ENCODE measurements at regions of chr4 and their contacts with region 1.

Region 1: DNA sequence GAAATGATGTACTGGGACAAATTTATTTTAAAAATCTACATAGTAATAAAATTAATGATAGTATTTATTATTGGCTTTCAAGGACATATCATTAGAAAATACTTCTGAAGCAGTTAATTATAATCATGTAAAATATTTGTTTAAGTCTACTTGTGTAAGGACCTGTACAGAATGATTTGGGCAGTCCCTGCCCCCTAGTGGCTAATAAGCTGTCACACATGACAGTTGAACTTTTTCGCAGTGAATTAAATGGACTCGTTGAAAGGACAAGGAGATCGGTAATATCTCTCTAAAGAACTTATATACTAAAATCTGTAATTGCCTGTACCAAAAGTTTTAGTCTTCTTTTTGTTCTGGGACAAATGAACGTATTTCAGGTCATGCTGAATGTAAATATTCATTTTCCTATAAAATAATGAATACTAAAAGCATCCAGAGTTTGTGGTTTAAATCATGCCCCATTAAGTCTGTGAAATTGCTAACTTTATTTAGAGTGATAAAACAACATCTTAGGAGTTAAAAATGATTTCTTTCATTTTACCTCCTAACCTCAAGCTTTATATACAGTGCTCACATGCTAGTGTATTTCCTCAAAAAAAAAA is 13.6 kb downstream of the EXOC1 start:
- DNase-seq: peak; percentile 76
- H3K4me3 Mint-ChIP-seq: no peak overlapping the region
- H3K27ac Mint-ChIP-seq: no peak overlapping the region
- H3K4me1 Mint-ChIP-seq: peaks cover 22% of the 10 kb centered on the region
- H3K27me3 Mint-ChIP-seq: no peaks in the 10 kb centered on the region
- CTCF ChIP-seq: peak; percentile 73

Region 2: GRCh38 chr4:55395529-55396307 is 471.4 kb before region 1 on chr4 and contains the start of gene TMEM165:
- CTCF ChIA-PET with region 1: interaction called, 4 read pairs
- POLR2A ChIA-PET with region 1: interaction called, 5 read pairs
- intact Hi-C with region 1: loop called (anchors 5 kb)
- DNase-seq: peak; percentile 93
- H3K4me3 Mint-ChIP-seq: peak within 1 kb of the TSS; percentile 93
- H3K27ac Mint-ChIP-seq: peak within 1 kb of the TSS; percentile 98
- H3K4me1 Mint-ChIP-seq: peaks cover 22% of the 10 kb centered on the region
- H3K27me3 Mint-ChIP-seq: no peaks in the 10 kb centered on the region
- CTCF ChIP-seq: no peak
- total RNA-seq, gene TMEM165: 110 and 119 TPM in 2 replicates

Region 3: GRCh38 chr4:55546756-55547465 is 320.2 kb before region 1 on chr4 and contains the start of gene CLOCK:
- CTCF ChIA-PET with region 1: interaction called, 10 read pairs
- POLR2A ChIA-PET with region 1: interaction called, 22 read pairs
- intact Hi-C with region 1: loop called (anchors 2 kb)
- DNase-seq: peak; percentile 85
- H3K4me3 Mint-ChIP-seq: peak within 1 kb of the TSS; percentile 87
- H3K27ac Mint-ChIP-seq: peak within 1 kb of the TSS; percentile 49
- H3K4me1 Mint-ChIP-seq: peaks cover 53% of the 10 kb centered on the region
- H3K27me3 Mint-ChIP-seq: no peaks in the 10 kb centered on the region
- CTCF ChIP-seq: peak; percentile 29
- total RNA-seq, gene CLOCK: 37.6 and 44.0 TPM in 2 replicates

Region 4: DNA sequence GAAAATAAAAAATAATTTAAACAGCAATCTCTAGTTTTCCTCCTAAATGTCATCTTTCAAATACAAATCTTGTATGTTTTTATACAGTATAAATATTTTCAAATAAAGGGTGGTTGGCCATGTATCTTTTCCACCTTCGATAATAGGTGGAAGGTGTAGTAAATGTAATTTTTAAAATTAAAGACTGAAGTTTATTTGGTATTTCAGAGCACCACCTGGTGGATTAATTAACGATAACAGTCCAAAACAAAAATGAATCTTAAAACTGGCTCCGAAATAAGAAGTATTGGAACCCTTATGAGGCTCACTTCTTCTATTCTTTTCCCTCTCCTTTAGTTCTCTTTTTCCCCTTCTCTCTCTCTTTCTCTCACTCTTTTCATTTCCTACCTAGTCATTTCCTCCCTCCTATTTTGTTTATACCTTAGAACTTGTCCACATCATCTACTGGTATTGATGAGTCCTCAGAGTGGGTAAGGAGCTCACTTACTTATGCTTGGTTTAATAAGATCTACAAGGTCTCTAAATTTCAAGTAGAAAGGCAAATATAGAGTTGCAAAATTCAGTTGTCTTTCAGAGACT is 130.4 kb before region 1 on chr4:
- CTCF ChIA-PET with region 1: interaction called, 13 read pairs
- POLR2A ChIA-PET with region 1: interaction called, 11 read pairs
- intact Hi-C with region 1: loop called (anchors 1 kb)
- DNase-seq: peak; percentile 27
- H3K4me3 Mint-ChIP-seq: no peak overlapping the region
- H3K27ac Mint-ChIP-seq: no peak overlapping the region
- H3K4me1 Mint-ChIP-seq: peaks cover 11% of the 10 kb centered on the region
- H3K27me3 Mint-ChIP-seq: no peaks in the 10 kb centered on the region
- CTCF ChIP-seq: peak; percentile 47

Region 5: GRCh38 chr4:55791666-55792065 is 75.4 kb before region 1 on chr4:
- CTCF ChIA-PET with region 1: no interaction called
- POLR2A ChIA-PET with region 1: no interaction called
- intact Hi-C with region 1: no loop called
- DNase-seq: peak; percentile 49
- H3K4me3 Mint-ChIP-seq: no peak overlapping the region
- H3K27ac Mint-ChIP-seq: no peak overlapping the region
- H3K4me1 Mint-ChIP-seq: peaks cover 4% of the 10 kb centered on the region
- H3K27me3 Mint-ChIP-seq: no peaks in the 10 kb centered on the region
- CTCF ChIP-seq: no peak

Region 6: DNA sequence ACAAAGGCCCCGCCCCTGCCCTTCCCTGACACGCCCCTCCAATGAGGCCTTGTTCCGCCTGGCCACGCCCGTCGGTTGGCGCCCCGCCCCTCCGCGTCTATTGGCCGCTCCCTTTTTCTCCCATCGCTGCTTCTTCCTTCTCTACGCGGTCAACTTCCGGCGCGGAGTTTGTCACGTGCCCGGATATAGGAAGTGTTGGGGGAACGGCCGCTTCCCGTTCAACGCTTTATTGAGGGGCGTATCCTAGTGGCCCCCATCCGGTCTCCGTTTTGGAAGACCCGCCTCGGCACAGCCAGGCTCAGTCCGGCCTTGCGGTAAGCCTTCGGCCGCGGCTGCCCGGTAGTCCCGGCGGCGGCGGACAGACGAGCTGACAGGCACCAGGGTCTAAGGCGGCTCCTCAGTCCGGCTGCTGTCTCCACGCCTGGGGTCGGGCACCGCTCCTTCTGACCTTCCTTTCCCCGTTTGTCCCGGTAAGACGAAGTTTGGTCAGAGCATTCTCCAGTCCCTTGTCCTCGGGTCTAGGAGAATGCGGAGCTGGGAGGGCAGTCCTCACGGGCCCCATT is 13.5 kb before region 1 on chr4 and contains the start of gene EXOC1:
- CTCF ChIA-PET with region 1: interaction called, 14 read pairs
- POLR2A ChIA-PET with region 1: interaction called, 87 read pairs
- intact Hi-C with region 1: no loop called
- DNase-seq: peak; percentile 97
- H3K4me3 Mint-ChIP-seq: no peak within 1 kb of the TSS
- H3K27ac Mint-ChIP-seq: peak within 1 kb of the TSS; percentile 90
- H3K4me1 Mint-ChIP-seq: peaks cover 14% of the 10 kb centered on the region
- H3K27me3 Mint-ChIP-seq: no peaks in the 10 kb centered on the region
- CTCF ChIP-seq: no peak
- total RNA-seq, gene EXOC1: 31.4 and 39.5 TPM in 2 replicates

Region 7: GRCh38 chr4:55948726-55949474 is 81.8 kb after region 1 on chr4 and contains the start of gene CEP135:
- CTCF ChIA-PET with region 1: no interaction called
- POLR2A ChIA-PET with region 1: interaction called, 11 read pairs
- intact Hi-C with region 1: no loop called
- DNase-seq: peak; percentile 90
- H3K4me3 Mint-ChIP-seq: peak within 1 kb of the TSS; percentile 91
- H3K27ac Mint-ChIP-seq: peak within 1 kb of the TSS; percentile 97
- H3K4me1 Mint-ChIP-seq: peaks cover 23% of the 10 kb centered on the region
- H3K27me3 Mint-ChIP-seq: no peaks in the 10 kb centered on the region
- CTCF ChIP-seq: peak; percentile 91
- total RNA-seq, gene CEP135: 12.4 and 14.0 TPM in 2 replicates